Motor neuron (in vitro differentiated cells): ENCODE measurements at regions of chr14 and their contacts with region 1.

Region 1: GRCh38 chr14:77320238-77320935 is at the start of gene POMT2:
- ATAC-seq: peak; percentile 50 to 71 (median 66)
- H3K4me3 ChIP-seq: peak within 1 kb of the TSS; percentile 61 to 100 (median 86)
- H3K27ac ChIP-seq: peak within 1 kb of the TSS; percentile 94 to 99
- H3K4me1 ChIP-seq: peaks cover 10 to 14% of the 10 kb centered on the region in 2 donors
- total RNA-seq, gene POMT2: 11.6 to 44.1 (median 19.6) TPM

Region 2: GRCh38 chr14:76876076-76876475 is 444.3 kb before region 1 on chr14:
- in situ Hi-C with region 1: loop called in 2 of 9 experiments (anchors 25 kb)
- ATAC-seq: peak; percentile 88 to 99 (median 97)
- H3K4me3 ChIP-seq: no peak overlapping the region
- H3K27ac ChIP-seq: no peak overlapping the region
- H3K4me1 ChIP-seq: peaks cover 2% of the 10 kb centered on the region in 2 donors

Region 3: DNA sequence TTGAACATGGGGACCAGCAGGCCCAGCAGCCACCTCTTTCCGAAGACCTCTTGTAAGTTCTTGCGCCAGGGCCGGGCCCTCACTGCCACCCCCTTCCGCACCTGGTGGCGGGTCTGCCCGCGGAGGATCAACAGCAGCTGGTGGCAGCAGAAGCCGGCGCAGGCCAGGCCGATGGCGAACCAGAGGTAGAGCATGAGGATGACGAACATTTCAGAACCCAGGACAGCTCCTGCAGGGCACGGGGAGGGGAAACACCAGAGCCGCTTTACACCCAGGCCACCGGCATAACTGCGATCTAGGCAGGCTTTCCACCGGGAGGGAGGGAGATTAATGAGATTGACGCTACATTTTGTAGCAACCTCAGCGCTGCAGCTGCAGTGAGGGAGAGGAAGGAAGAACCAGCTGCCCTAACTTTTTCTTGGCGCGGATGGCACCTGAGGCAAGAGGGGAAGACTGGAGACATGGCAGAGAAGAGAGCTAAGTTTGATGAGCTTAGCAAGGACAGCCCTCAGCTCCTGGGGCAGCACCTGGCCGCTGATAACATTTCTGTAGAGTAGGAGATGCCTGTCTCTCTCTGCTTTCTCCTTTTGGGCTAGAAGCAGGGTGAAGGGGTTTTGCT is 186.6 kb before region 1 on chr14:
- in situ Hi-C with region 1: loop called in 2 of 9 experiments (anchors 25 kb)
- ATAC-seq: peak; percentile 25 to 99 (median 84)
- H3K4me3 ChIP-seq: no peak overlapping the region
- H3K27ac ChIP-seq: no peak overlapping the region
- H3K4me1 ChIP-seq: peaks cover 11 to 16% of the 10 kb centered on the region in 2 donors

Region 4: GRCh38 chr14:77455966-77456640 is 135.7 kb after region 1 on chr14:
- in situ Hi-C with region 1: no loop called
- ATAC-seq: no peak
- H3K4me3 ChIP-seq: peak overlapping the region in 4 of 5 donors; percentile 55 to 90 (median 62)
- H3K27ac ChIP-seq: no peak overlapping the region
- H3K4me1 ChIP-seq: peaks cover 8 to 10% of the 10 kb centered on the region in 2 donors

Region 5: GRCh38 chr14:78182722-78183121 is 862.3 kb after region 1 on chr14:
- in situ Hi-C with region 1: no loop called
- ATAC-seq: no peak
- H3K4me3 ChIP-seq: no peak overlapping the region
- H3K27ac ChIP-seq: no peak overlapping the region
- H3K4me1 ChIP-seq: peaks cover 4 to 10% of the 10 kb centered on the region in 2 donors